CD8-positive, alpha-beta memory T cell (primary cell): ENCODE measurements at regions of chr7 and their contacts with region 1.

Region 1: DNA sequence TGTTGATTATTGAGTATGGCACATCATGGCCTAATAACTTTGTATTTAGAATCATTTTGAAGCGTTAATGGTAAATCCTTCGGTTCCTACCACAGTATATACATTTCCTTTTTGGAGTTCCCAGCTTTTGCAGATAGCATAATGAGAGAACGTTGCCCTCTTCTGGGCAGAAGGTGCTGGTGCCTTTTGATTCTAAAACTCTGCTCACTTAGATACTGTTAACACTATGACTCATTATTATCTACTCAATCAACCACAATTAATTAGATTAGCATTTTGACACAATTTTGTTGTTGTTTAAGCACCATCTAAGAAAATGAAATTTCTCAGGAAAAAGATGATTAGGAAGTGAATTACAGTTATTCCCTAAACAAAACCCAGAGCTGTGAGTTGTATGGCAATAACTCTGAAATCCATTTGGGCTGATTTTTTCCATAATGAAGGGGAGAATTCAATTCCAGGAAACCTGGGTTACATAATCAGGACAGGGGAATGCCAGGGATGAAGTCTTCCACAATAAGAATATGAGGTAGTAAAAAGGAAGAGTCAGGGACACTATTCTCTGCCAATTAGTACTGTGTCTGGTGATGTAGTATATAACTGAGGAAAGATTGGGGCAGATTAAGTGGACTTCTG is 11.5 kb upstream of the DLD start:
- DNase-seq: peak in 4 of 5 donors; percentile 19 to 50 (median 32)
- H3K4me3 ChIP-seq: no peak overlapping the region
- H3K4me3 Mint-ChIP-seq: no peak overlapping the region
- H3K27ac ChIP-seq: no peak overlapping the region
- H3K27ac Mint-ChIP-seq: no peak overlapping the region
- H3K4me1 ChIP-seq: peaks cover 4% of the 10 kb centered on the region
- H3K4me1 Mint-ChIP-seq: peaks cover 8 to 19% (median 10%) of the 10 kb centered on the region in 3 donors
- H3K27me3 ChIP-seq: no peaks in the 10 kb centered on the region
- H3K27me3 Mint-ChIP-seq: peaks cover 4 to 30% of the 10 kb centered on the region in 2 donors

Region 2: GRCh38 chr7:107718456-107719193 is 160.9 kb before region 1 on chr7:
- CTCF ChIA-PET with region 1: interaction called, 10 read pairs
- POLR2A ChIA-PET with region 1: no interaction called
- DNase-seq: no peak
- H3K4me3 ChIP-seq: no peak overlapping the region
- H3K4me3 Mint-ChIP-seq: no peak overlapping the region
- H3K27ac ChIP-seq: no peak overlapping the region
- H3K27ac Mint-ChIP-seq: no peak overlapping the region
- H3K4me1 ChIP-seq: no peaks in the 10 kb centered on the region
- H3K4me1 Mint-ChIP-seq: no peaks in the 10 kb centered on the region
- H3K27me3 ChIP-seq: no peaks in the 10 kb centered on the region
- H3K27me3 Mint-ChIP-seq: peaks cover 0 to 10% of the 10 kb centered on the region in 2 donors

Region 3: DNA sequence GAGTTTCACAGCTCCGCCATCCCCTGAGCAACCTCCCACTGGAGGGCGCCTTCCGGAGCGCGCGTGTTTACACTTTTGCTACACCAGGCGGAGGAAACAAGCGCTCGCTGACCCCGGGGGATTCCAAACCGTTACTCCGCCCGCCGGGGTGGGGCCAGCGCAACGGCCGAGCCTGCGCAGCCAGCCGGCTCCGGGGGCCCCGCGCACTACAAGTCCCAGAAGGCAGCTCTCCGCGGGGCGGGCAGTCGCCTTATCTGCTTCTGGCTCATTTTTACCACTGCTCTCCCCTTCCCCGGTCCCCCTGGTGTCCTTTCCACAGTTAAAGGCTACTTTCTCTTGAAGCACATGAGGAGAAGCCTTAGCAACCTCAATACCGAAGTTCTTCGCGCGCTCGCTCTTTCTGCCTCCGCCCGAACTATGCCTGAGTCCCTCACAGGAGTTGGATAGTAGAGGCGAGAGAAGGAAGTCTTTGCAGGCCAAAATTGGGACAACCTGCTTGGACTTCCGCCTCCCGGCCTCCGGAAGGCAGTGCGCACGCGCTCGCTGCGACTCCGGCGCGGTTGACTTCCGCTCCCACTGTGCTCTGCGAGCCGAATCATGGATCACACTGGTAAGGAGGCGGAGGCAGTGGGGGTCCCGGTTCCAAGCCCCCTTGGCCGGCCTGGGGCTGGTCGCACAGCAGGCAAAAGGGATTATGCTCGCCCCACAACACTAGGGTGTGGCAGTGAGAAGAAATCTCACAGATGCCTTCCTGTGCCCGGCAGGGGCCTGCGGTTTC is 135.8 kb before region 1 on chr7 and contains the start of gene CBLL1:
- CTCF ChIA-PET with region 1: interaction called, 227 read pairs
- POLR2A ChIA-PET with region 1: interaction called, 23 read pairs
- DNase-seq: peak; percentile 96 to 98 (median 97)
- H3K4me3 ChIP-seq: peak within 1 kb of the TSS; percentile 97
- H3K4me3 Mint-ChIP-seq: peak within 1 kb of the TSS; percentile 93 to 99 (median 97)
- H3K27ac ChIP-seq: peak within 1 kb of the TSS; percentile 98
- H3K27ac Mint-ChIP-seq: peak within 1 kb of the TSS; percentile 94 to 100 (median 100)
- H3K4me1 ChIP-seq: peaks cover 47% of the 10 kb centered on the region
- H3K4me1 Mint-ChIP-seq: peaks cover 50 to 59% (median 55%) of the 10 kb centered on the region in 3 donors
- H3K27me3 ChIP-seq: no peaks in the 10 kb centered on the region
- H3K27me3 Mint-ChIP-seq: no peaks in the 10 kb centered on the region
- total RNA-seq, gene CBLL1: 42.7 to 49.3 TPM

Region 4: DNA sequence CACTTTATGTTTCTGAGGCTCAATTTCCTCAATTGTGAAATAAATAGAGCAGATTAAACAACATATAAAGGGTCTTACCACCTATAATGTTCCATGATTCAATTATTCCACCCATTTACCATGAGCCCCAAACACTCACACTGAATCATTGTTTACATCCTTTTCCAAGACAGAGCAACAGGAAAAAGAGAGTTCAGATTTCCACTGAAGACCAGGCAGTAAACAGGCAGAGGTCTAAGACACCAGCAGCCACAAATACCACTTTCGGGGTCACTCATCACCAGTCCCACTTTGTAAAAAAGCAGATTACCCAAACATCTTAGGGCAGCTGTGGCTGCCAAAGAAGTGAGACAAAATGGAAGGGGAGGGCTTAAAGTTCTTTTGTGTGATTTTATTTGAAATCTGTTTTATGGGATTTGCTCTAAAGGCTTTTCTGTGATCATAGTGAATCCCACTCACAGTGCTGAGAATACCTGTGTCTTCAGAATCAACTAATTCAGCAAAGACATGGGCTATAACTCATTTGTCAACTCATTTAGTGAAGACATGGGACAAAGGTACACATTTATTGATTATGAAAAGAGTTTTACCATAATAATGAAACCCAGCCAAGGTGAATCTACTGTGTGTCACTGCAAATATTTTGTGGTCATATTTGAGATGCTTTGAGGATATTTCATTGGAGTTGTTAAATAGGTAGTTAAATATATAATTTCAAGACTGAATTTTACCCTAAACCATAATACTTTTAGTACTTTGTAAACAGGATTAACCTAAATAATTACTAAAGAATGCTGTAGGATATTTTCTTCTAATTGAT is 13.4 kb before region 1 on chr7:
- CTCF ChIA-PET with region 1: interaction called, 15 read pairs
- POLR2A ChIA-PET with region 1: no interaction called
- DNase-seq: no peak
- H3K4me3 ChIP-seq: no peak overlapping the region
- H3K4me3 Mint-ChIP-seq: peak overlapping the region in 5 of 7 donors; percentile 9 to 58 (median 27)
- H3K27ac ChIP-seq: no peak overlapping the region
- H3K27ac Mint-ChIP-seq: peak overlapping the region in 6 of 8 donors; percentile 65 to 90 (median 76)
- H3K4me1 ChIP-seq: peaks cover 4% of the 10 kb centered on the region
- H3K4me1 Mint-ChIP-seq: peaks cover 27 to 51% (median 40%) of the 10 kb centered on the region in 3 donors
- H3K27me3 ChIP-seq: no peaks in the 10 kb centered on the region
- H3K27me3 Mint-ChIP-seq: no peaks in the 10 kb centered on the region